ENCODE measurements at regions of chr4 and their contacts with region 1.

Region 1: GRCh38 chr4:38675146-38676121 is 11.4 kb downstream of the KLF3 start:
- DNase-seq: peak; percentile 82
- H3K4me3 ChIP-seq: no peak overlapping the region
- H3K27ac ChIP-seq: peak overlapping the region; percentile 80 to 85
- H3K4me1 ChIP-seq: peaks cover 46% of the 10 kb centered on the region
- H3K27me3 ChIP-seq: no peaks in the 10 kb centered on the region
- CTCF ChIP-seq: peak; percentile 93 to 95 (median 94)
- POLR2A ChIP-seq: no peak

Region 2: GRCh38 chr4:38069271-38069760 is 606.1 kb before region 1 on chr4:
- intact Hi-C with region 1: loop called (anchors 5 kb)
- DNase-seq: peak; percentile 60
- H3K4me3 ChIP-seq: no peak overlapping the region
- H3K27ac ChIP-seq: no peak overlapping the region
- H3K4me1 ChIP-seq: no peaks in the 10 kb centered on the region
- H3K27me3 ChIP-seq: no peaks in the 10 kb centered on the region
- CTCF ChIP-seq: peak in 3 of 4 experiments; percentile 26 to 83 (median 77)
- POLR2A ChIP-seq: no peak

Region 3: DNA sequence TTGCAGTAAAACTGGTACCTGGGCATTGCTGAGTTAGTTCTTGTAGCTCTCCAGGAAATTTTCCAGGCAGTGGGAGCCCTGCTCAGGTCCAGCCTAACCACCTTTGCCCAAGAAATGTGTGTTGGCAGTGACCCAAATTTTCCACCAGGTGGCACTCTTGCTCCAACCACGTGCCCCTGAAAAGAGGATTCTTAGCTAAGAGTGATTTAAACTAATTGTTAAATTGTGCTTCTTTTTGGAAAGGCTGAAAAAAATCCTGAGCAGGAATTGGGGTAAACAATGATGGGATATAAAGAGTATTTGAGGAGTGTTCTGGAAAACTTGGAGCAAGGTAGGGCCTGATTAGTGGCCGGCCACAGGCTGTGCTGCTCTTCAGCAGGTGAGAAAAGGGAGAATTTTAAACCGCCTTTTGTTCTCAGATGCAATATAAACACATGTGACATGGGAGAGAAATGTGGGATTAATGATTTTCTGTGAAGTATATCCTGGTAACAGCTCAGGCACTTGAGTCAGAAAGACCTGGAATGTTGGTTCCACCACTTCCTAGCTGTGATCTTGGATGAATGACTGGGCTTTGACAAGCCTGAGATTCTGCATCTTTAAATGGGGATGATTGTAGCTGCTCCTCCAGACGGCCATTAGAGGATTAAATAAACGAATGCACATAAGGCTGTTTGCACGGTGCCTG is 495.6 kb before region 1 on chr4:
- intact Hi-C with region 1: loop called (anchors 2 kb)
- DNase-seq: peak; percentile 86
- H3K4me3 ChIP-seq: no peak overlapping the region
- H3K27ac ChIP-seq: peak overlapping the region in 1 of 2 donors; percentile 12
- H3K4me1 ChIP-seq: peaks cover 12% of the 10 kb centered on the region
- H3K27me3 ChIP-seq: no peaks in the 10 kb centered on the region
- CTCF ChIP-seq: peak; percentile 86 to 94 (median 92)
- POLR2A ChIP-seq: no peak

Region 4: GRCh38 chr4:38319456-38320342 is 355.7 kb before region 1 on chr4:
- intact Hi-C with region 1: loop called (anchors 2 kb)
- DNase-seq: peak; percentile 92
- H3K4me3 ChIP-seq: no peak overlapping the region
- H3K27ac ChIP-seq: peak overlapping the region; percentile 70 to 77
- H3K4me1 ChIP-seq: peaks cover 2% of the 10 kb centered on the region
- H3K27me3 ChIP-seq: no peaks in the 10 kb centered on the region
- CTCF ChIP-seq: peak; percentile 95 to 96 (median 96)
- POLR2A ChIP-seq: no peak

Region 5: GRCh38 chr4:38482696-38483095 is 192.7 kb before region 1 on chr4:
- intact Hi-C with region 1: no loop called
- DNase-seq: no peak
- H3K4me3 ChIP-seq: no peak overlapping the region
- H3K27ac ChIP-seq: no peak overlapping the region
- H3K4me1 ChIP-seq: no peaks in the 10 kb centered on the region
- H3K27me3 ChIP-seq: no peaks in the 10 kb centered on the region
- CTCF ChIP-seq: no peak
- POLR2A ChIP-seq: no peak

Region 6: DNA sequence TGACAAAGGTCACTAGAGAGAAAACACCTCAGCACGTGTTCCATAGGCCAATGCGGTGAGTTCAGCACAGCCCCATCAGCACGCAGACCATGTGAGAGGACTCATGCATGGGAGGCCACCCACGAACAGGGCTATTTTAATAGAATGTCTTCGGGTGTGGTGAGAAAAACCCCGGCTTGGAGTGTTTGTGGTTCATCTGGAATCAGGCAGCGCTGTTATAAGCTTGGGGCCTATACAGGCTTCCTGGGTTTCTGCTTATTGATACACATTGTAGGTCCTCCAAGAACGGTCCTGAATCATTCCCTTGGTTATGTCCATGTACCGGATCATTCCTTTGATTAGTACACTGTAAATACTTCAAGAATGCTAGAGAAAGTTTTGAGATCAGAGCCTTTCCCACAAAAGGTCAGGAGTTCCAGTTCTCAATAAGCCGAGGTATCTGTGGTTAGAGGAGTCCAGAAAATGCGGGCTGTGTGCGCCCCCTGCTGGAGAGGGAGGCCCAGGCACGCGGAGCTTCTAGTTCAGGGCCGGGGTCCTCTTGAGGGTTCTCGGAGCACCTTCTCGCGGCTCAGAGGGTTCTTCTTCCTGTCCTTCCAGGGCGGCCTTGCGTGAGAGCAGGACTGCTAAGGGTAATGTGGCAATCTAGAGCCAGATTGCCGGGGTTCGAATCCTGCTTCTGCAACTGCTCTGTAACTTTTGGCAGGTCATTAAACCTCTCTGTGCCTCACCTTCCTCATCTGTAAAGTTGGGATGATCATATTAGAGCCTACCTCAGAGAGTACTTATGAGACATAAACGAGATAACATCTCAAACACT is 55.6 kb after region 1 on chr4:
- intact Hi-C with region 1: loop called (anchors 5 kb)
- DNase-seq: peak; percentile 73
- H3K4me3 ChIP-seq: no peak overlapping the region
- H3K27ac ChIP-seq: no peak overlapping the region
- H3K4me1 ChIP-seq: no peaks in the 10 kb centered on the region
- H3K27me3 ChIP-seq: no peaks in the 10 kb centered on the region
- CTCF ChIP-seq: peak; percentile 91 to 94 (median 92)
- POLR2A ChIP-seq: no peak

Region 7: GRCh38 chr4:38743866-38744265 is 68.4 kb after region 1 on chr4:
- intact Hi-C with region 1: no loop called
- DNase-seq: no peak
- H3K4me3 ChIP-seq: no peak overlapping the region
- H3K27ac ChIP-seq: no peak overlapping the region
- H3K4me1 ChIP-seq: no peaks in the 10 kb centered on the region
- H3K27me3 ChIP-seq: no peaks in the 10 kb centered on the region
- CTCF ChIP-seq: no peak
- POLR2A ChIP-seq: no peak